ENCODE measurements at regions of chr3 and their contacts with region 1.

Region 1: GRCh38 chr3:123028233-123028828 is 768 bp upstream of the SEMA5B start:
- DNase-seq: peak in 5 of 14 experiments; percentile 5 to 55 (median 46)
- ATAC-seq: peak; percentile 34
- H3K4me3 ChIP-seq: peak overlapping the region; percentile 58
- H3K4me3 Mint-ChIP-seq: peak overlapping the region; percentile 81
- H3K27ac ChIP-seq: no peak overlapping the region
- H3K27ac Mint-ChIP-seq: no peak overlapping the region
- H3K4me1 ChIP-seq: peaks cover 24% of the 10 kb centered on the region
- H3K4me1 Mint-ChIP-seq: peaks cover 12% of the 10 kb centered on the region
- H3K27me3 ChIP-seq: peaks cover 79 to 89% of the 10 kb centered on the region in 2 experiments
- H3K27me3 Mint-ChIP-seq: peaks cover 60% of the 10 kb centered on the region
- CTCF ChIP-seq: peak; percentile 43

Region 2: DNA sequence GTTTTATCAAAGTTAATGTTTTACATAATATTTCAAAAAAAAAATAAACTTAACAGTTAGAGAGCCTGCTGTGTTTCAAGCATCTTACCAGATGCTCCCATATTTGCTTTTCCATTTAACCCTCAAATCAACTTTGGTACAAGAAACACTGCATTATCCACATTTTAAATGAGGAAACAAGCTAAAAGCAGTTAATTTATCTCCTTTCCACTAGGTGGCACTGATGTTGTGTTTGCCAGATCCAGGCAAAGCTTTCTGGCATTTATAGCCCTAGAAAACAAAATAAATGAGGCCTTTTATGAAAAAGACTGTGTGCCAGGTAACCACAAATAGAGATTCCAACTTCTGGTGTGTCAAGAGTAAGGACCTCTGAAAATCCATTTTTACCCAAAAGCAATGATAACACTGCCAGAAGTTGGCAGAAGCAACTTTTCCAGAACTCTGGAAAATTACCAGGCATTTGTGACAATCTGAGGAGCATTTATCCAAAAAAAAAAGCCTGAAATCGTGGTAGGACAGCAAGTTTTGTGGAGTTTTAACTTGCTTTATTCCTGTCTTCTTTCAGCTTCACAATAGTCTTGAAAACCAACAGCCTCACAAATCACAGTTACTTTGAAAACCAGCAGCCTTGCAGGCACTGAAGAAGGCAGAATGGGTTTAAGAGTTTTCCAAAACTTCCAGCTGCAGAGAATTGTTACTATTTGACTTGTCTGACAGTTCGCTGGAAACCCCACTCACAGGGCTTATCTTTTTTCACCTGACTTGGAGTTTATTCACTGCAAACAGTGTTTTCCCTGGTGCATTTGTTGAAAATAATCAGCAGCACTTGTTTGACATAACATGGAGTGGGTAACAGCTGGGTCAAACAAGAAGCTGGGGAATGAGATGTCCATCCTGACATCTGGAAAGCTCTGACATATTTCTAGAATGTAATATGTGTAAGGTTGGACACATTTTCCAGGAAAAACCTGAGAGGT is 635.2 kb before region 1 on chr3:
- CTCF ChIA-PET with region 1: no interaction called
- POLR2A ChIA-PET with region 1: no interaction called
- intact Hi-C with region 1: loop called (anchors 2 to 5 kb)
- DNase-seq: peak in 5 of 14 experiments; percentile 5 to 68 (median 64)
- ATAC-seq: peak; percentile 55
- H3K4me3 ChIP-seq: no peak overlapping the region
- H3K4me3 Mint-ChIP-seq: no peak overlapping the region
- H3K27ac ChIP-seq: no peak overlapping the region
- H3K27ac Mint-ChIP-seq: no peak overlapping the region
- H3K4me1 ChIP-seq: no peaks in the 10 kb centered on the region
- H3K4me1 Mint-ChIP-seq: peaks cover 10% of the 10 kb centered on the region
- H3K27me3 ChIP-seq: no peaks in the 10 kb centered on the region
- H3K27me3 Mint-ChIP-seq: no peaks in the 10 kb centered on the region
- CTCF ChIP-seq: peak; percentile 81

Region 3: DNA sequence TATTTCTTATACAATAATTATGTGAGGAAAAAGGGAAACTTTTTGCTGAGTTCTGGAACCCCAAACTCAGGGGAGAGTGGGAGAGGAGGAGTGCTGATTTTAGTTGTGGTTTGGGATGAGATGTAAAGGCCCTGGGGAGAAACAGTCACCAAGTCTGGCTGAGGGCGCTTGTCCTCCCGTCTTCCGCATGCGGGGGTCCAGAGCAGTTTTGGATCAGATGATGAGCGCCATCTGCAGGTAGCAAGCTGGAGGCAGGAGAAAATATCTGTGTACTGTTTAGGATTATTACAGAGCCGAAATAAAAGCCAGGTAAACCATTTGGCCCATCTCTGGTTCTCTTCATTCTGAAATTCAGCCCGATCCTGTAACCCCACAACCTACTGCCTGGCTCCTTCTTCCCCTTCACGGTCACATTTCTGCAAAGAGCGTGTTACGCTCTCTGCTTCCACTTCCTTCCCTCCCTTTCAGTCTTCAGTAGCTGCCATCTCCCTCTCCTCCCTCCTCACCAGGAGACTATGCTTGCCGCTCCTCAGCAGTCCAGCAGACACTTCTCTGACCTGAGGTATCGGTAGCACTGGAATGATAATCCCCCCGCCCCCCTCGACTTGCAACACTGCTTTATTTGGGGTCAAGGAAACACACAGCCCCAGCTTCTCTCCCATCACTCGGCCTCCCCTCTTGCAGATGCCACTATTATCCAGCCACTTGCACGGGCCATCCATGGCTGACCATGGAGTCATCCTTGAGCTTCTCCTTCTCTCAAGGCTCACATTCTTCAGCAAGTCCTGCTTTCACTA is 349.0 kb before region 1 on chr3:
- CTCF ChIA-PET with region 1: no interaction called
- POLR2A ChIA-PET with region 1: no interaction called
- intact Hi-C with region 1: no loop called
- DNase-seq: peak; percentile 71 to 92 (median 78)
- ATAC-seq: peak; percentile 68
- H3K4me3 ChIP-seq: peak overlapping the region; percentile 93
- H3K4me3 Mint-ChIP-seq: peak overlapping the region; percentile 93
- H3K27ac ChIP-seq: peak overlapping the region; percentile 88 to 91
- H3K27ac Mint-ChIP-seq: peak overlapping the region; percentile 96
- H3K4me1 ChIP-seq: peaks cover 46% of the 10 kb centered on the region
- H3K4me1 Mint-ChIP-seq: peaks cover 54% of the 10 kb centered on the region
- H3K27me3 ChIP-seq: no peaks in the 10 kb centered on the region
- H3K27me3 Mint-ChIP-seq: no peaks in the 10 kb centered on the region
- CTCF ChIP-seq: peak; percentile 83

Region 4: DNA sequence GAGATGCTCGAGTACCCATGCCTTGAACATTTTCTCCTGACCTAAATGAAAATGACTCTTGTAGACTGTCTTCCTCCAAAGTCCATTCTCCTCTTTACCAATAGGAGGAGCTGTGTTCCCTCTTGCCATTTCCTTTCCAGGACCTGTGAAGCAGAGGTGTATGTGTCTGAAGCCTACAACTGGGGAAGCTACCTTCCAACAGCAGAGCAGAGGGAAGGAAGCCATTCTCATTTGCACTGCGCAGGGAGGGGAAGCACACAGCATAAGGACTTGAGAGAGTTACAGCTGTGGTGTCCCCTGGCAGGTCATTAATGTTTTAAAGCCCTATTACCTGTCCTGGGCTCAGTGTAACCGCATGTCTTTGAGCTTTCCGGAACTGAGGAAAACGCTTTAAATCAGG is 273.4 kb before region 1 on chr3:
- CTCF ChIA-PET with region 1: no interaction called
- POLR2A ChIA-PET with region 1: no interaction called
- intact Hi-C with region 1: loop called (anchors 2 to 10 kb)
- DNase-seq: peak in 6 of 14 experiments; percentile 2 to 67 (median 34)
- ATAC-seq: peak; percentile 70
- H3K4me3 ChIP-seq: no peak overlapping the region
- H3K4me3 Mint-ChIP-seq: no peak overlapping the region
- H3K27ac ChIP-seq: no peak overlapping the region
- H3K27ac Mint-ChIP-seq: no peak overlapping the region
- H3K4me1 ChIP-seq: no peaks in the 10 kb centered on the region
- H3K4me1 Mint-ChIP-seq: no peaks in the 10 kb centered on the region
- H3K27me3 ChIP-seq: no peaks in the 10 kb centered on the region
- H3K27me3 Mint-ChIP-seq: no peaks in the 10 kb centered on the region
- CTCF ChIP-seq: peak; percentile 74

Region 5: GRCh38 chr3:122843604-122844003 is 184.7 kb before region 1 on chr3:
- CTCF ChIA-PET with region 1: no interaction called
- POLR2A ChIA-PET with region 1: no interaction called
- intact Hi-C with region 1: no loop called
- DNase-seq: peak in 1 of 14 experiments; percentile 27
- ATAC-seq: no peak
- H3K4me3 ChIP-seq: no peak overlapping the region
- H3K4me3 Mint-ChIP-seq: no peak overlapping the region
- H3K27ac ChIP-seq: no peak overlapping the region
- H3K27ac Mint-ChIP-seq: no peak overlapping the region
- H3K4me1 ChIP-seq: no peaks in the 10 kb centered on the region
- H3K4me1 Mint-ChIP-seq: no peaks in the 10 kb centered on the region
- H3K27me3 ChIP-seq: no peaks in the 10 kb centered on the region
- H3K27me3 Mint-ChIP-seq: no peaks in the 10 kb centered on the region
- CTCF ChIP-seq: no peak